Heart left ventricle (tissue), 16 donors: ENCODE measurements at regions of chr1 and their contacts with region 1.

Region 1: DNA sequence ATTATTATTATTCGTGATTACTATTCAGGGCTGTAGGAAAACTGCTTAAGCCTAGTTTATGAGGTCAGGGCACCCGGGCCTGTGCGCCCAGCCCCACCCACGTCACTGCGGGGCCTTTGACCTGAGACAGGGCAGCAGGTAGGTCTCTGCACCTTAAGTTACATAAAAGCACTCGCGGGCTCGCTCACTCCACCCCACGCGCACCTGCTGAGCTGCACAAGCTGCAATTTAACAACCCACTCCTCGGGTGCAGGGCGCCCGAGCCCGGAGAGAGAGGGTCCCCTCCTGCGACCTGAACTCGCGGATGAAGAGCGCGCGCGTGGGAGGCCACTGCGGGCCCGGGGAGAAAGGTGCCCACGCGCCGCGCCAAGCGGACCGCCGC is 477 bp downstream of the ICMT start:
- DNase-seq: no peak
- ATAC-seq: peak in 2 of 4 donors; percentile 2 to 4
- H3K4me3 ChIP-seq: peak overlapping the region; percentile 51 to 95 (median 77)
- H3K27ac ChIP-seq: peak overlapping the region in 11 of 12 donors; percentile 25 to 85 (median 75)
- H3K4me1 ChIP-seq: peaks cover 0 to 38% (median 21%) of the 10 kb centered on the region in 12 donors
- H3K27me3 ChIP-seq: peaks cover 0 to 13% (median 5%) of the 10 kb centered on the region in 9 donors
- CTCF ChIP-seq: no peak
- POLR2A ChIP-seq: no peak

Region 2: GRCh38 chr1:6041432-6042062 is 193.7 kb before region 1 on chr1:
- intact Hi-C with region 1: loop called in 1 of 10 experiments (anchors 5 kb)
- DNase-seq: no peak
- ATAC-seq: peak in 2 of 4 donors; percentile 44 to 50
- H3K4me3 ChIP-seq: no peak overlapping the region
- H3K27ac ChIP-seq: no peak overlapping the region
- H3K4me1 ChIP-seq: peaks cover 0 to 6% (median 0%) of the 10 kb centered on the region in 12 donors
- H3K27me3 ChIP-seq: no peaks in the 10 kb centered on the region
- CTCF ChIP-seq: peak in 10 of 12 donors; percentile 27 to 54 (median 49)
- POLR2A ChIP-seq: no peak

Region 3: DNA sequence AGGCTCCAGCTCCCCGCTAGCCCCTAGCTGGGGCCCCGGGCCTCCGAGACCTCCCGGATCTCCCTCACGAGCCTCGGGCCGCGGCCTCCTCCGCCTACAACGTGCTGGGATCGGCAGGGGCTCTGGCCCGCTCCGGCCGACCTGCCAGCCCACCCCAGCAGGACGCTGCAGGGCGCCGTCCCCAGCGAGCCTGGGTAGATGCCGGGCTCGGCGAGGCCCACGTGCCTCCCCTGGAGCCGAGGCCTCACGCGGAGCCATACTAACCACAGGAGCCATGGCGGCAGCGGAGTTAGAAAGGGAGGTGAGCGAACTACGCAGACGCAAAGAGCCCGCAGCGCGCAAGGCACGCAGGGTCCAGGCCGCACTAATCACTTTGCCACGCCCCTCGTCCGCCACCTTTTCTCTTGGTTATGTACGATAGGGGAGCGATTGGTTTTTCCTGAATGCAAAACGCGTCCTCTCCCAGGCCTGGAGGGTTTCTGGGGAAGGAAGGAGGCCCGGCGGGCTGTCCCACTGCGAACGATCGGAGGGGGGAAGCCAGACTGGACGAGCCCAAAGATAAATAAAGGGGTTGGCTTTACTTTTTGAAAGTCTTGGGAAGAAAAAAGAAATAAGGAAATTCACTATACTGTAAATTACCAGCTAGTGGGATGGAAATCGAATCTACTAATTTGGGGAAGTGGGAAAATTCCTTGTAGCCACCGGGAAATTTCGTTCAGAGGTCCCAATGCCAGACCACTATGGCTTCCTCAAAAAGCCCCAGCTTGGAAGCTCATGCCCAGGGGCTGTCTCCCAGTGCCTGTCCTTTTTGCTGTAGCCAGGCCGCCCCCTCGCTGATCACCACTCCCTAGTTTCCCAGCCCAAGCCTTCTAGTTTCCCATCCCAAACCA is 35.7 kb before region 1 on chr1 and contains the start of gene RPL22:
- intact Hi-C with region 1: loop called in 4 of 10 experiments (anchors 2 to 5 kb)
- DNase-seq: peak; percentile 98 to 99 (median 98)
- ATAC-seq: peak; percentile 97 to 99 (median 98)
- H3K4me3 ChIP-seq: peak within 1 kb of the TSS; percentile 77 to 100 (median 89)
- H3K27ac ChIP-seq: peak within 1 kb of the TSS; percentile 66 to 93 (median 84)
- H3K4me1 ChIP-seq: peaks cover 8 to 31% (median 21%) of the 10 kb centered on the region in 12 donors
- H3K27me3 ChIP-seq: no peaks in the 10 kb centered on the region
- CTCF ChIP-seq: peak in 1 of 12 donors; percentile 10
- POLR2A ChIP-seq: peak in 1 of 2 donors; percentile 78
- total RNA-seq, gene RPL22: 63.6 to 343 (median 241) TPM

Region 4: GRCh38 chr1:6205849-6206519 is 29.3 kb before region 1 on chr1 and contains the start of gene RNF207:
- intact Hi-C with region 1: loop called in 5 of 10 experiments (anchors 1 to 5 kb)
- DNase-seq: peak; percentile 77 to 90 (median 80)
- ATAC-seq: peak; percentile 17 to 74 (median 72)
- H3K4me3 ChIP-seq: peak within 1 kb of the TSS; percentile 47 to 80 (median 68)
- H3K27ac ChIP-seq: peak within 1 kb of the TSS; percentile 86 to 99 (median 92)
- H3K4me1 ChIP-seq: peaks cover 0 to 57% (median 44%) of the 10 kb centered on the region in 12 donors
- H3K27me3 ChIP-seq: peaks cover 0 to 34% (median 0%) of the 10 kb centered on the region in 9 donors
- CTCF ChIP-seq: no peak
- POLR2A ChIP-seq: peak; percentile 32 to 52
- total RNA-seq, gene RNF207: 27.0 to 126 (median 58.2) TPM

Region 5: DNA sequence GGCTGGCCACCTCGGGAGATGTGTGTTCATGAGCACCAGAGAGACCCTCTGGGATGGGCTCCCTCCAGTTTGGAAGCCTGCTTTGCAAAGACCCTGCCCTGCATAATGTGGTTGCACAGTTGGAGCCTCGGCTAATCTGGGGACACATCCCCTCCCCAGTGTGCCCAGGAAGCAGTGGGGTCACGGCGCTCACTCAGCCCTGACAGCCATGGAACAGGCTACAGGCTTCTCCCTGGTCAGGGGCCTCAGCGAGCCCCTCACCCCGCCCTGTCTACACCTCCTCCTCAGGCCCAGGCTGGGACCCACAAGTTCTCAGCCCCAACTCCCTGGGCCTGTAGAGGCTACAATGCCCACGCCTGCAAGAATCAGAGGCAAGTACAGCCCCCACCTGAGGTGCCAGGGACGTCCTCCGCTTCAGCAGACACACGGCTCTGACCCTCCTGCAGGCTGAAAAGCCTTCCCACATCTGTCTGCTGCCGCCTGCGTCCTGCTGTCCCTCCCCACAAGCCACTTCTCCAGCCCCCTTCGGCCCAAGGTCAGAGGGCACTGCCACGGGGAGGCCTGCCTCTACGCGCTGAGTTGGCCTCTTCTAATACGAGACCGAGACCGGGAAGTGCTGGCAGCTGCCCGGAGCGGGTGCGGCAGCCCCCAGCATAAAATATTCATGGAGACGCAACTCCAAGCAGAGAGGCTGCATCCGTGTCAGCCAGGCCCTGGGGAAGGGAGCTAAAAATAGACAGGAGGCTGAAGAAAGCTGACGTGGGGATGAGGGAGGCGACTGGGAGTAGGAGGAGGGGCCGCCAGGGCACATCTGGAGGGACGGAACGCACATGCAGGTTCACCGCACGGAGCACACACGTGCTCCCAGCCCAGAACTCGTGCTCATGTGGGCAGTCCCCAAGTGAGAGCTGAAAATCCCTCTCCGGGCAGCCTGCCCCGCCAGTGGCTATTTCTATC is 40.8 kb after region 1 on chr1:
- intact Hi-C with region 1: no loop called
- DNase-seq: peak in 4 of 5 donors; percentile 78 to 86 (median 84)
- ATAC-seq: peak; percentile 72 to 89 (median 86)
- H3K4me3 ChIP-seq: peak overlapping the region in 10 of 12 donors; percentile 1 to 50 (median 27)
- H3K27ac ChIP-seq: peak overlapping the region; percentile 38 to 91 (median 81)
- H3K4me1 ChIP-seq: peaks cover 0 to 18% (median 8%) of the 10 kb centered on the region in 12 donors
- H3K27me3 ChIP-seq: no peaks in the 10 kb centered on the region
- CTCF ChIP-seq: no peak
- POLR2A ChIP-seq: no peak

Region 6: DNA sequence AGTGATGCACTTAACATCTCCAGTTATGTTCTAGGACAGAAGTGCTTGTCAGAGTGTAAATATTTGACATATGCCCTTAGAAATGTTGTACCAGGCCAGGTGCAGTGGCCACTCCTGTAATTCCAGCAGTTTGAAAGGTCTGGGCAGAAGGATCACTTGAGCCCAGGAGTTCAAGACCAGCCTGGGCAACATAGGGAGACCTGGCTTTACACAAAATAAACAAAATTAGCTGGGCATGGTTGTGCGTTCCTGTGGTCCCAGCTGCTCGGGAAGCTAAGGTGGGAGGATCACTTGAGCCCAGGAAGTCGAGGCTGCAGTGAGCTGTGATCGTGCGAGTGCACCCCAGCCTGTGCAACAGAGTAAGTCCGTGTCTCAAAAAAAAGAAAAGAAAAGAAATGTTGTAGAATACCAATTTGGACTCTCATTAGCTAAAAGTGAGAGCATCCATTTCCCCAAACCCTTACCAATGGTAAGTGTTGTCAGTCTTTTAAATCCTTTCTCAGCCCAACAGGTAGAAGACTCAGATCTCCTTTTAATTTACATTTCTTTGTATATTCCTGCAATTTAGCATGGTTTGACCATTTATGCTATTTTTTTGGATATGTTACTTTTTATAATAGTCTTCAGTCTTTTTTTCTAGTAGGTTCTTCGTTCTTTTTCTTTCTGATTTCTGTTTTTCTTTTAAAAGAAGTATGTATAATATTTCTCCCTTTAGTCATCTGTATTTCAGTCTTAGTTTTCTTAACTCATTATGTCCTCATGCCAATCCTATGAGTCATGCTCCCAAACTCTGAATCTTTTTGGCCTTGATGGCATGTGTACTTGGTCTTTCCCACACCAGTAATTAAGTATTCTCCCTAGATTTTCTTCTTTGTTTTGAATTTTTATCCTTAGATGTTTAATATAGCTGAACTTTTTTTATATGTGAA is 624.4 kb after region 1 on chr1:
- intact Hi-C with region 1: no loop called
- DNase-seq: no peak
- ATAC-seq: peak in 2 of 4 donors; percentile 57 to 66
- H3K4me3 ChIP-seq: no peak overlapping the region
- H3K27ac ChIP-seq: peak overlapping the region in 5 of 12 donors; percentile 18 to 39 (median 35)
- H3K4me1 ChIP-seq: peaks cover 0 to 22% (median 11%) of the 10 kb centered on the region in 12 donors
- H3K27me3 ChIP-seq: no peaks in the 10 kb centered on the region
- CTCF ChIP-seq: no peak
- POLR2A ChIP-seq: no peak